Ovary (tissue), 10 donors: ENCODE measurements at regions of chr7 and their contacts with region 1.

Region 1: DNA sequence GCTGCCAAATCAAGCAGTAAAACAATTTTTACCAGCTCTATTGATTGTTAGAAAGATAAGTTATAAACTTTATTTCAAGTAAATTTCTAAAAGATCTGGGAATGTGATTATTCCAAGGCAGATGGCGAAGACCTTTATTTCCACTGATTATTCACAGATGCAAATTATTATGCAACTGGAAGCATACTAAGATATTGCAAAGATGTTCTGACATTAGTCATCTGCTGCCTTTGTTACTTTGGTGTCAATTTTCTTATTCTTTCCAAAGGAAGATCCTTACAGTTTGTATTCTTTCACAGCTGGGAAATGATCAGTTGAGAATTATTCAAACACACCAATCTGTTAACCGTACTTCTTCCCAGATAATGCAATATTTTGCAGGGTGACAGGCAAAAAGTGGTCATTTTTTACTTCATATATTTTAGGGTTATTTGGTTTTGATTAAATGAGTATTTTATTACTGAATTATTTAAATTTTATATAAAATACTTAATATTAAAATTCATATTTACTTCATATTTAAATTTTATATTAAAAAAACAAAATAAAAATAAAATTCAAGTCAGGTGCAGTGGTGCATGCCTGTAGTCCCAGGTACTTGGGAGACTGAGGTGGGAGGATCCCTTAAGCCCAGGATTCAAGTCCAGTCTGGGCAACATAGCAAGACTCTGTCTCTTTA is 171.3 kb downstream of the FZD1 start:
- DNase-seq: no peak
- H3K4me3 ChIP-seq: no peak overlapping the region
- H3K27ac ChIP-seq: no peak overlapping the region
- H3K4me1 ChIP-seq: no peaks in the 10 kb centered on the region
- H3K27me3 ChIP-seq: no peaks in the 10 kb centered on the region
- CTCF ChIP-seq: no peak
- EP300 ChIP-seq: no peak
- POLR2A ChIP-seq: no peak

Region 2: DNA sequence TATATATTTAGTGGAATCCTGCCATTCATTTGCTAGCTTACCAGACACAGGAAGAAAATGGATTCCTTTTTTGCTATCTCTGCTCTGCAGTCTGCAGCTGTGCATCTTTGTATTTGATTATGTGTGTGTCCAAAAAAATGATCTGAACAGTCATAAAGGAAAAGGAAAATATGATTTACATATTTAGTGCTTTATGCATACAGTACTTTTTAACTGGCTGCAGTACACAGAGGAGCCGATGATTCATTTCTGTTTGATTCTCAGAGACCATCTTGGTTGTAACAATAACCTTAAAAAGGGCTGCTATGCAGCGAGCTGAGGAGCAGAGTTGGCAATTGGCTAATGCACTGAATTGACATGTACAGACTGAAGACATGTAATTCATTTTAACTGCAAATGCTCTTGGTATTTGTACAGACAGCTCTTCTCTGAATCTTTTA is 322.6 kb before region 1 on chr7:
- intact Hi-C with region 1: no loop called
- DNase-seq: no peak
- H3K4me3 ChIP-seq: no peak overlapping the region
- H3K27ac ChIP-seq: no peak overlapping the region
- H3K4me1 ChIP-seq: no peaks in the 10 kb centered on the region
- H3K27me3 ChIP-seq: no peaks in the 10 kb centered on the region
- CTCF ChIP-seq: no peak
- EP300 ChIP-seq: no peak
- POLR2A ChIP-seq: no peak

Region 3: DNA sequence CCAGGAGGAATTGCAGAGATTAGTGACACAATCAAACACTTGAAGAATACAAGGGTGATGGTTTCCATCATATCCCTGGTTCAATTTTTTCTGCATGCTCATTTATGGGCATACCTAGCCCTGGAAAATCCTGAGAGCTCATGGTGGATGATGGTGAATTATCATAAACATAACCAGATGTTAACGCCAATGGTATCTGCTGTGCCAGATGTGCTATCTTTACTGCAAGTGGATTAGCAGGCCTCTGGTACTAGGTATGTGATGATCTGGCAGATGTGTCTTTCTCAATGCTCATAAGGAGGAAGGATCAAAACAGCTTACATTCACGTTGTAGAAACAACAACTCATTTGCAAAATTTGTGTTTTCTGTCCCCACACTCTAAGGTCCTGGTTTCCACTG is 20.8 kb before region 1 on chr7:
- intact Hi-C with region 1: loop called in 1 of 4 experiments (anchors 1 kb)
- DNase-seq: no peak
- H3K4me3 ChIP-seq: no peak overlapping the region
- H3K27ac ChIP-seq: no peak overlapping the region
- H3K4me1 ChIP-seq: no peaks in the 10 kb centered on the region
- H3K27me3 ChIP-seq: no peaks in the 10 kb centered on the region
- CTCF ChIP-seq: no peak
- EP300 ChIP-seq: no peak
- POLR2A ChIP-seq: no peak